ENCODE measurements at regions of chr20 and their contacts with region 1.

Region 1: GRCh38 chr20:414161-414560 is 6.1 kb downstream of the RBCK1 start:
- DNase-seq: no peak
- H3K4me3 ChIP-seq: no peak overlapping the region
- H3K27ac ChIP-seq: no peak overlapping the region
- H3K4me1 ChIP-seq: peaks cover 23% of the 10 kb centered on the region
- H3K27me3 ChIP-seq: no peaks in the 10 kb centered on the region
- CTCF ChIP-seq: no peak

Region 2: GRCh38 chr20:478949-479429 is 64.8 kb after region 1 on chr20:
- CTCF ChIA-PET with region 1: interaction called, 10 read pairs
- POLR2A ChIA-PET with region 1: no interaction called
- intact Hi-C with region 1: no loop called
- DNase-seq: peak in 1 of 2 experiments; percentile 21
- H3K4me3 ChIP-seq: no peak overlapping the region
- H3K27ac ChIP-seq: no peak overlapping the region
- H3K4me1 ChIP-seq: no peaks in the 10 kb centered on the region
- H3K27me3 ChIP-seq: no peaks in the 10 kb centered on the region
- CTCF ChIP-seq: peak; percentile 79

Measured in PC-9 (cell line).